Right cardiac atrium (tissue), 5 donors: ENCODE measurements at regions of chr13 and their contacts with region 1.

Region 1: DNA sequence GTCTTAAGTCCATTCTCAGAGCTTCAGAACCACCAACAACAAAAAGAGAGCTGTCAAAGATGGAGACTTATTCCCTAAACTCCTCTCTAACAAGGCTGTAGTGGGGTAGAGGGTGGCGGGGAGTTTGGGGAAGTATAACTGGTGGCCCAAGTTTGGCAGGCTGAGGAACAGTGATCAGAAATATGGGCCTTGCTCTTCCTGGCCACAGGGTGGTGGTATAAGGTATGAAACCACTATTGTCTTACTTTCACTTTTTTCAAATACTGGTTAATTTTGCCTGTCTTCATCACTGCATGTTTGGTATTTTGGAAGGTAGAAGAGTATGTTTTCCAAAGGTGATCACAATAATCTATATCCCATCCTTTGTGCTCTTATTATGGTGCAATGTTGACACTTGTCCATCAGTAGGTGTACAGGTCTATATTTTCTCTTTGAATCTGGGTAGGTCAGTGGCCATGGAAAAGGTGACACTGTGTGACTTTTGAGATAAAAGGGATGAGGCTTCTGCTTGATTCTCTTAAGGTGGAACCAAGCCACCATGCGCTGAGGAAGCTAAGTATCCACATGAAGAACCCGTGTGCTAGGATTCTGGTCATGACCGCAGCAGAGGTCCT is 23.2 kb upstream of the GPC5 start:
- DNase-seq: no peak
- ATAC-seq: no peak
- H3K4me3 ChIP-seq: no peak overlapping the region
- H3K27ac ChIP-seq: no peak overlapping the region
- H3K4me1 ChIP-seq: no peaks in the 10 kb centered on the region
- H3K27me3 ChIP-seq: no peaks in the 10 kb centered on the region

Region 2: DNA sequence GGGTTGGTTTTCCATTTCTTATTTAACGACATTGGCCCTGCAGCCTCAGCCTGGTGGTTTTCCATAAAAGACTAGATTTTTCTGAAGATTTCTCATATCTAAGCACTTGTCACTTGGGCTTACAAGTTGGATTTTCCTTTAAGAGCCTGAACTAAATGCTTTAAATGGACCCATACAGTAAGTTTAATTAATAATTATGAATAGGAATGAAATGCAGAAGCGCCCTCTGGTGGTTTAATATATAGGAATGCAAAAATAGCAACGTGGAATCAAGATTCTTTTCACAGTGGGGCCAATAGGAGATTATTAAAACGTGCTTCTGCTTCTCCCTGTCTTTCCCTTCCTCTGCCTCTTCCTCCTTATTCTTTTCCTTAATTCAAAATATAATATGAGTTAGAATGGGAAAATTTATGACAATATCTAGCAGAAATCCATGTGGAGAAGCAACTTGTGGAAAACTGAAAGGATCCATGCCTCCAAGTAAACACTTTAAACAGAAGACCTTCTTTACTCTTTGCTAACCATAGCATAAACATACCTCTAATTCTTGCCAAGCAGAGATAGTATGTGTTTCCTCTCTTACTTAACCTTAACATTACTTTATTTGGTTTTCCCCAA is 347.2 kb after region 1 on chr13:
- intact Hi-C with region 1: loop called in 3 of 4 experiments (anchors 10 kb)
- DNase-seq: no peak
- ATAC-seq: no peak
- H3K4me3 ChIP-seq: no peak overlapping the region
- H3K27ac ChIP-seq: no peak overlapping the region
- H3K4me1 ChIP-seq: no peaks in the 10 kb centered on the region
- H3K27me3 ChIP-seq: no peaks in the 10 kb centered on the region